Endothelial cell of umbilical vein (primary cell): ENCODE measurements at regions of chr5 and their contacts with region 1.

Region 1: DNA sequence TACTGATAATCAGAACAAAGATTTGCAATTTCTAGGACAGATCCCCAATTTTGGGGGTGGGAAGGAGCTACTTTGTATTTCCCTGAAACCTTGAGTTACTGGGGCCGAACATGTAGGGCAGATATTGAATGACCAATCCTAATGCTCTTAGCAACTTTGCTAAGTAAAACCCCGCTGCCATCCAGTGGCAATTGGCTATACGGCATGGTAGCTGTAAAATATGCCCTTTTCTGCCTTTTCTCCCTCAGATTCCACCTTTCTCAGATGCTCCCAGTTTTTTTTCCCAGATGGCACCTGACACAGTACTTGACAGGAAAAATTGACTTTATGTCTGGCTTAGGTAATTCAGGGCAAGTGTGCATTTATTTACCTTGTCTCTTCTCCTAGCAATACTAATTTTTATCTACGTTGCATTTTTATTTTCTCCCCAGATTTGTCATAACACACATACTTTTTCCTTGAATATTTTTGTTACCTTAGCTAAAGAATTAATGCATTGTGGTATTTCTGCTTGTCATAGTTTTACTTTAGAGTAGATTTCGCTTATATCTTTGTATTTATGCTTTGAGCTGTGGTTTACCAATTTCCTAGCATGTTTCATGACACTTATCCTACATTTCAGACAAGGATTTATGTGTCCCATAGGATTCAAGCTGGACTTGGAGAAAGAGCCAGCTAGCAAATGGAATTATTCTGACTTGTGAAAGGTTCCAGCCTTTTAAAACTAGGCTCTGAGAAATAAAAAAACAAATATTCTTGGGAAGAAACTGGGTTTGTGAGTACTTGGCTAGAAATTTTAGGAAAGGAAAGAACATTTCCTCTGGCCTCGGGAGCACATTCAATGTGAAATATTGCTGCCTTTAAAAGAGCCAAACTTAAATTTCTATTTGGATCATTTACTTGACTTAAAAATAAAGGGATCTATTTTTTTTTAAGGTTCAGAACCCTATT is 37.4 kb downstream of the PIK3R1 start:
- DNase-seq: peak; percentile 73
- H3K4me3 ChIP-seq: no peak overlapping the region
- H3K27ac ChIP-seq: no peak overlapping the region
- H3K4me1 ChIP-seq: peaks cover 48% of the 10 kb centered on the region
- H3K27me3 ChIP-seq: no peaks in the 10 kb centered on the region
- CTCF ChIP-seq: peak; percentile 79 to 80
- POLR2A ChIP-seq: no peak

Region 2: DNA sequence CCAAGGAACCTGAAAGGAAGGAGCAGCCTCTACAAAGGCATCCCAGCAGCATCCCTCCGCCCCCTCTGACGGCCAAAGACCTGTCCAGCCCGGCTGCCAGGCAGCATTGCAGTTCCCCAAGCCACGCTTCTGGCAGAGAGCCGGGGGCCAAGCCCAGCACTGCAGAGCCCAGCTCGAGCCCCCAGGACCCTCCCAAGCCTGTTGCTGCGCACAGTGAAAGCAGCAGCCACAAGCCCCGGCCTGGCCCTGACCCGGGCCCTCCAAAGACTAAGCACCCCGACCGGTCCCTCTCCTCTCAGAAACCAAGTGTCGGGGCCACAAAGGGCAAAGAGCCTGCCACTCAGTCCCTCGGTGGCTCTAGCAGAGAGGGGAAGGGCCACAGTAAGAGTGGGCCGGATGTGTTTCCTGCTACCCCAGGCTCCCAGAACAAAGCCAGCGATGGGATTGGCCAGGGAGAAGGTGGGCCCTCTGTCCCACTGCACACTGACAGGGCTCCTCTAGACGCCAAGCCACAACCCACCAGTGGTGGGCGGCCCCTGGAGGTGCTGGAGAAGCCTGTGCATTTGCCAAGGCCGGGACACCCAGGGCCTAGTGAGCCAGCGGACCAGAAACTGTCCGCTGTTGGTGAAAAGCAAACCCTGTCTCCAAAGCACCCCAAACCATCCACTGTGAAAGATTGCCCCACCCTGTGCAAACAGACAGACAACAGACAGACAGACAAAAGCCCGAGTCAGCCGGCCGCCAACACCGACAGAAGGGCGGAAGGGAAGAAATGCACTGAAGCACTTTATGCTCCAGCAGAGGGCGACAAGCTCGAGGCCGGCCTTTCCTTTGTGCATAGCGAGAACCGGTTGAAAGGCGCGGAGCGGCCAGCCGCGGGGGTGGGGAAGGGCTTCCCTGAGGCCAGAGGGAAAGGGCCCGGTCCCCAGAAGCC is 1087.2 kb before region 1 on chr5:
- CTCF ChIA-PET with region 1: interaction called, 39 read pairs
- POLR2A ChIA-PET with region 1: no interaction called
- dilution Hi-C with region 1: loop called (anchors 25 kb)
- intact Hi-C with region 1: loop called (anchors 1 kb)
- DNase-seq: peak; percentile 74
- H3K4me3 ChIP-seq: no peak overlapping the region
- H3K27ac ChIP-seq: peak overlapping the region; percentile 42
- H3K4me1 ChIP-seq: peaks cover 8% of the 10 kb centered on the region
- H3K27me3 ChIP-seq: no peaks in the 10 kb centered on the region
- CTCF ChIP-seq: peak; percentile 74 to 88
- POLR2A ChIP-seq: no peak

Region 3: DNA sequence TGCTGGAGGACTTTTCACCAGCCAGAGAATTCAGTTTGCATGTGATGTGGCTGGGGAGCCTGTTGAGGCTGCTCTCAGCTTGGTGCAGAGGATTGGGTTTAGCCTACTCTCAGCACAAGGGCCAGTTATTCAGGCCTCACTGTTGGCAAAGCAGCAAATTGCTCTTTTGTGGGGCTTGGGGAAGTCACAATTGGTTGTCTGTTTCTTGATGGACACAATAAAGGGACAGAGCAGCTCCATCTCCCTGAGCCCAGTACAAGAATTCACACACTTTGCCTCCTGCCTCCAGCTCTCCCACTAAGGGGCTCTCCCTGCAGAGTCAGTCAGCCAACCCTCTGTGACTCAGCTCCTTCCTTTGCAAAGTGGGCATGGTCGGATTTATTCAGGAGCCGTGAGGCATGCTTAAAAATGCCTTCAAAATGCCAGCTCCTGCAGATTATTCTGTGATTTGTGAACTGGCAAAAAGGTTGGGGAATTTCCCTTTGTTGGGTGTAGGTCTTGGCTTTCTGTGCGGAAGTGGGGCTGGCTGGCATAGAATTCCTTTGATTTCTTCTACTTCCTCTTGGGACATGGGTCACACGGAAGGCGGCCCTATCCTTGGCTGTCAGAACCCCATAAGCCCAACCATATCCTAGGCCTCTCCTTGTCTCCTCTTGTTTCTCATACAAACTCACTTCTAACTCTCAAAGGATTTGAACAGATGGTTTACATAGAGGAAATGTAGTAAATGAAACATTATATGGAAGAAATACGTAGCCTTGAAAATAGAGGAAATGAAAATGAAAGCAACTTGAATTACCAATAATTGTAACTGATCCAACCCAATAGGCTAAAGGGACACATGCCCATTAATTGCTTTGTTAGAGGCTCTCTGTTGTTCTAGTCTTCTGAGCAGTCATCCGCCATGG is 937.6 kb before region 1 on chr5:
- CTCF ChIA-PET with region 1: interaction called, 7 read pairs
- POLR2A ChIA-PET with region 1: no interaction called
- dilution Hi-C with region 1: no loop called
- intact Hi-C with region 1: loop called (anchors 5 kb)
- DNase-seq: peak; percentile 81
- H3K4me3 ChIP-seq: peak overlapping the region in 1 of 3 experiments; percentile 24
- H3K27ac ChIP-seq: peak overlapping the region; percentile 75
- H3K4me1 ChIP-seq: peaks cover 14% of the 10 kb centered on the region
- H3K27me3 ChIP-seq: no peaks in the 10 kb centered on the region
- CTCF ChIP-seq: no peak
- POLR2A ChIP-seq: no peak

Region 4: DNA sequence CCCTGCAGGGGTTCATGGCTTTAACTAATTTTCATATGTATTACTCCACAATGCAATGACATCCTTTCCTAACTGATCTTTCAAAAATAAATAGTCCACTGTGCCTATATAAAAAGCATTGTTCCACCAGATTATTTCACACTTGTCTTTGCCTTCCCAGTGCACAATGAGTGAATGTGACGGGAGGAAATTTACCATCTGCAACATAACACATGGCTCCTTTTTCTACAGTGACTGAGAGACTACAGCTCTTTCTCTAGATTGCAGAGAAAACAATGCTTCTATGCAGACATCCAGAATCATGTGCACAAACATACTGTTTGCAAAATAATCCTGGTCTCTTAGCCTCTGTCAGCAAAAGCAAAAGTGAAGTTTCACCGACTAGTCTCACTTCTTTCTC is 521.1 kb before region 1 on chr5:
- CTCF ChIA-PET with region 1: interaction called, 5 read pairs
- POLR2A ChIA-PET with region 1: no interaction called
- dilution Hi-C with region 1: no loop called
- intact Hi-C with region 1: loop called (anchors 5 kb)
- DNase-seq: no peak
- H3K4me3 ChIP-seq: no peak overlapping the region
- H3K27ac ChIP-seq: no peak overlapping the region
- H3K4me1 ChIP-seq: peaks cover 32% of the 10 kb centered on the region
- H3K27me3 ChIP-seq: no peaks in the 10 kb centered on the region
- CTCF ChIP-seq: no peak
- POLR2A ChIP-seq: no peak

Region 5: GRCh38 chr5:67998709-67999261 is 254.2 kb before region 1 on chr5:
- CTCF ChIA-PET with region 1: no interaction called
- POLR2A ChIA-PET with region 1: no interaction called
- dilution Hi-C with region 1: no loop called
- intact Hi-C with region 1: loop called (anchors 1 kb)
- DNase-seq: peak; percentile 82
- H3K4me3 ChIP-seq: no peak overlapping the region
- H3K27ac ChIP-seq: peak overlapping the region; percentile 85
- H3K4me1 ChIP-seq: peaks cover 14% of the 10 kb centered on the region
- H3K27me3 ChIP-seq: no peaks in the 10 kb centered on the region
- CTCF ChIP-seq: no peak
- POLR2A ChIP-seq: peak; percentile 23

Region 6: GRCh38 chr5:68046445-68046844 is 206.5 kb before region 1 on chr5:
- CTCF ChIA-PET with region 1: no interaction called
- POLR2A ChIA-PET with region 1: no interaction called
- dilution Hi-C with region 1: no loop called
- intact Hi-C with region 1: no loop called
- DNase-seq: peak; percentile 42
- H3K4me3 ChIP-seq: no peak overlapping the region
- H3K27ac ChIP-seq: no peak overlapping the region
- H3K4me1 ChIP-seq: no peaks in the 10 kb centered on the region
- H3K27me3 ChIP-seq: no peaks in the 10 kb centered on the region
- CTCF ChIP-seq: no peak
- POLR2A ChIP-seq: no peak